T-cell (primary cell): ENCODE measurements at regions of chr11 and their contacts with region 1.

Region 1: GRCh38 chr11:28107748-28108618 is at the starts of genes KIF18A and METTL15:
- DNase-seq: peak; percentile 89 to 98 (median 94)
- ATAC-seq: peak; percentile 91 to 96 (median 94)
- H3K4me3 ChIP-seq: peak within 1 kb of the TSS; percentile 64 to 99
- H3K4me3 Mint-ChIP-seq: peak within 1 kb of the TSS; percentile 89 to 94 (median 93)
- H3K27ac ChIP-seq: peak within 1 kb of the TSS; percentile 97
- H3K27ac Mint-ChIP-seq: peak within 1 kb of the TSS; percentile 91 to 97
- H3K4me1 ChIP-seq: peaks cover 18 to 26% of the 10 kb centered on the region in 2 experiments
- H3K4me1 Mint-ChIP-seq: peaks cover 52 to 70% (median 61%) of the 10 kb centered on the region in 3 donors
- H3K27me3 ChIP-seq: no peaks in the 10 kb centered on the region
- H3K27me3 Mint-ChIP-seq: no peaks in the 10 kb centered on the region
- total RNA-seq, gene KIF18A: 0.76 to 3.7 (median 1.3) TPM
- total RNA-seq, gene METTL15: 7.6 to 12.1 (median 10.6) TPM

Region 2: DNA sequence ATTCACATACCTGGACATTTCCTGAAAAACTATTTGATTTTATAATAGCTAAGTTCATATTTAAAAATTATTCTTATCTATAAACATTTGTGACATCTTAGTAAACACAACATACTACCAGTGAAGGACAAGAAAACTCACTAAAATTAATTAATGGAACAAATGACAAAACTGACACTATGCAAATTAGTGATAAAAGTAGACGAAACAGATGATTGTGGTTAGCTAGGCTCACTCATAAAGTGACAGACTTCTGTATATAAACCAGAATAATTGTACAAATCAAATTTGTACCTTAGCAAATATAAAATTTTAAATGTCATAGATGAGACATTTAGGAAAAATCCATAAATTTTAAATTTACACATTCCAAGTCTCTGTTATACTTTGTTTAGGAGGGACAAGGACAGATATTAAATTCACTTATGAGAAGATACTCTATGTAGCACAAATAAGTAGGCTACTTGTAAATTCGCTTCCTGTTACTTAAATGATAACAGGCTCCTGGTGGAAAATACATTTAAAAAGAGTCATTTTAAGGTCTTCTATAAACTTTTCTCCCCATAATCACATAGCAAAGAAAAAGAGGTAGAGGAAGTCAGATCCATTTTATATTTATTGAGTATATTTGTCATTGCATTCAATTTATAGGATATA is 81.2 kb before region 1 on chr11:
- CTCF ChIA-PET with region 1: no interaction called
- POLR2A ChIA-PET with region 1: no interaction called
- DNase-seq: no peak
- ATAC-seq: no peak
- H3K4me3 ChIP-seq: no peak overlapping the region
- H3K4me3 Mint-ChIP-seq: no peak overlapping the region
- H3K27ac ChIP-seq: no peak overlapping the region
- H3K27ac Mint-ChIP-seq: no peak overlapping the region
- H3K4me1 ChIP-seq: no peaks in the 10 kb centered on the region
- H3K4me1 Mint-ChIP-seq: no peaks in the 10 kb centered on the region
- H3K27me3 ChIP-seq: no peaks in the 10 kb centered on the region
- H3K27me3 Mint-ChIP-seq: no peaks in the 10 kb centered on the region

Region 3: GRCh38 chr11:28058333-28058732 is 49.6 kb before region 1 on chr11:
- CTCF ChIA-PET with region 1: interaction called in 1 of 2 experiments, 3 read pairs
- POLR2A ChIA-PET with region 1: interaction called in 1 of 2 experiments, 20 read pairs
- DNase-seq: no peak
- ATAC-seq: no peak
- H3K4me3 ChIP-seq: no peak overlapping the region
- H3K4me3 Mint-ChIP-seq: no peak overlapping the region
- H3K27ac ChIP-seq: no peak overlapping the region
- H3K27ac Mint-ChIP-seq: no peak overlapping the region
- H3K4me1 ChIP-seq: no peaks in the 10 kb centered on the region
- H3K4me1 Mint-ChIP-seq: no peaks in the 10 kb centered on the region
- H3K27me3 ChIP-seq: no peaks in the 10 kb centered on the region
- H3K27me3 Mint-ChIP-seq: no peaks in the 10 kb centered on the region

Region 4: DNA sequence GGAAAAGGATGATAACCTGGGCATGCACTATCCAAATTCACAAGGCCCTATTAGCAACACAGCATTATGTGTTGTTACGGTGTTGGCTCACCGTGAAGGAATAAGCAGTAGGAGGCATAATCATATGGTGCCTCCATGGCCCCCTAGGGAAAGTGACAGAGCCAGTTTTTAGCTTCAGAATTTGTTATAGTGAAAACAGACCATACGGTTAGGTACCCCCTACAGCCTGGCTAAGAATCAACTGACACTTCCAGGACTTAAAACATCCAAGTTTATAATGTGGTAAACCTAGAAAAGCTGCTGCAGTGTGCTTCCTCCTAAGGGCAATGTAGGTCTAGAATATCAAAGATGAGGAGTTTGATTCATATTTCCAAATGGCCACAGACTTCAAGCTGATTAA is 30.5 kb before region 1 on chr11:
- CTCF ChIA-PET with region 1: no interaction called
- POLR2A ChIA-PET with region 1: interaction called in 1 of 2 experiments, 10 read pairs
- DNase-seq: no peak
- ATAC-seq: no peak
- H3K4me3 ChIP-seq: no peak overlapping the region
- H3K4me3 Mint-ChIP-seq: no peak overlapping the region
- H3K27ac ChIP-seq: no peak overlapping the region
- H3K27ac Mint-ChIP-seq: no peak overlapping the region
- H3K4me1 ChIP-seq: peaks cover 0 to 2% of the 10 kb centered on the region in 2 experiments
- H3K4me1 Mint-ChIP-seq: peaks cover 0 to 1% (median 0%) of the 10 kb centered on the region in 3 donors
- H3K27me3 ChIP-seq: no peaks in the 10 kb centered on the region
- H3K27me3 Mint-ChIP-seq: no peaks in the 10 kb centered on the region